Gastrocnemius medialis (tissue), 4 donors: ENCODE measurements at regions of chr20 and their contacts with region 1.

Region 1: GRCh38 chr20:49270177-49270576 is 7.7 kb downstream of the ZNFX1 start:
- DNase-seq: no peak
- ATAC-seq: peak in 1 of 2 donors; percentile 67
- H3K4me3 ChIP-seq: no peak overlapping the region
- H3K27ac ChIP-seq: peak overlapping the region in 2 of 4 donors; percentile 16 to 21
- H3K4me1 ChIP-seq: peaks cover 22 to 37% of the 10 kb centered on the region in 2 donors
- H3K27me3 ChIP-seq: no peaks in the 10 kb centered on the region
- CTCF ChIP-seq: no peak
- POLR2A ChIP-seq: no peak

Region 2: GRCh38 chr20:49028684-49029083 is 241.5 kb before region 1 on chr20:
- in situ Hi-C with region 1: no loop called
- intact Hi-C with region 1: no loop called
- DNase-seq: no peak
- ATAC-seq: no peak
- H3K4me3 ChIP-seq: no peak overlapping the region
- H3K27ac ChIP-seq: no peak overlapping the region
- H3K4me1 ChIP-seq: no peaks in the 10 kb centered on the region
- H3K27me3 ChIP-seq: no peaks in the 10 kb centered on the region
- CTCF ChIP-seq: no peak
- POLR2A ChIP-seq: no peak

Region 3: GRCh38 chr20:49230561-49231193 is 39.5 kb before region 1 on chr20:
- in situ Hi-C with region 1: no loop called
- intact Hi-C with region 1: loop called (anchors 5 kb)
- DNase-seq: peak in 1 of 2 donors; percentile 17
- ATAC-seq: peak in 1 of 2 donors; percentile 39
- H3K4me3 ChIP-seq: no peak overlapping the region
- H3K27ac ChIP-seq: no peak overlapping the region
- H3K4me1 ChIP-seq: no peaks in the 10 kb centered on the region
- H3K27me3 ChIP-seq: no peaks in the 10 kb centered on the region
- CTCF ChIP-seq: no peak
- POLR2A ChIP-seq: no peak